ENCODE measurements at regions of chr4 and their contacts with region 1.

Region 1: GRCh38 chr4:81844717-81845116 is 373.0 kb upstream of the RASGEF1B start:
- DNase-seq: peak; percentile 80

Region 2: GRCh38 chr4:81405894-81406401 is 438.8 kb before region 1 on chr4:
- intact Hi-C with region 1: loop called (anchors 2 kb)
- DNase-seq: no peak

Region 3: GRCh38 chr4:81606801-81607501 is 237.8 kb before region 1 on chr4:
- intact Hi-C with region 1: loop called (anchors 10 kb)
- DNase-seq: no peak

Region 4: DNA sequence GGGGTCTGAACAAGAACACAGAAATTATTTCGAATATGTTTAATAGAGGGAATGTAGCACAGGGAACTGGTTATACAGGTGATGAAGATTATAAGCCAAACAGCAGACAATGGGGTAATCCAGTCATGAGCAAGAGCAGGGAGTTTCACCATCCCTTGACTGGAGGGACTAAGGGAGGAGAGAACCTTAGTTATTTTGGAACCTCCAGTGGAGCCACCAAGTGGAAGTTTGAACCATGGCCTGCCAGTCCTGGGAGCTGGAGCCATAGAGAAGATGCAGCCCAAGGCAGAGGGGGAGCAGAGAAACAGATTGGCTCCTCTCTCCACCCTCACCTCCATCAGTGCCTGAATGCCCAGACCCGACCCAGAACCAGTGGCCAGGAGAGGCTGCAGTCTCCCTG is 108.4 kb before region 1 on chr4:
- intact Hi-C with region 1: loop called (anchors 10 kb)
- DNase-seq: no peak

Region 5: GRCh38 chr4:82201805-82202641 is 357.3 kb after region 1 on chr4:
- intact Hi-C with region 1: loop called (anchors 10 kb)
- DNase-seq: no peak

Measured in cardiac septum (tissue), 1 donor.